ENCODE measurements at regions of chr19 and their contacts with region 1.

Region 1: DNA sequence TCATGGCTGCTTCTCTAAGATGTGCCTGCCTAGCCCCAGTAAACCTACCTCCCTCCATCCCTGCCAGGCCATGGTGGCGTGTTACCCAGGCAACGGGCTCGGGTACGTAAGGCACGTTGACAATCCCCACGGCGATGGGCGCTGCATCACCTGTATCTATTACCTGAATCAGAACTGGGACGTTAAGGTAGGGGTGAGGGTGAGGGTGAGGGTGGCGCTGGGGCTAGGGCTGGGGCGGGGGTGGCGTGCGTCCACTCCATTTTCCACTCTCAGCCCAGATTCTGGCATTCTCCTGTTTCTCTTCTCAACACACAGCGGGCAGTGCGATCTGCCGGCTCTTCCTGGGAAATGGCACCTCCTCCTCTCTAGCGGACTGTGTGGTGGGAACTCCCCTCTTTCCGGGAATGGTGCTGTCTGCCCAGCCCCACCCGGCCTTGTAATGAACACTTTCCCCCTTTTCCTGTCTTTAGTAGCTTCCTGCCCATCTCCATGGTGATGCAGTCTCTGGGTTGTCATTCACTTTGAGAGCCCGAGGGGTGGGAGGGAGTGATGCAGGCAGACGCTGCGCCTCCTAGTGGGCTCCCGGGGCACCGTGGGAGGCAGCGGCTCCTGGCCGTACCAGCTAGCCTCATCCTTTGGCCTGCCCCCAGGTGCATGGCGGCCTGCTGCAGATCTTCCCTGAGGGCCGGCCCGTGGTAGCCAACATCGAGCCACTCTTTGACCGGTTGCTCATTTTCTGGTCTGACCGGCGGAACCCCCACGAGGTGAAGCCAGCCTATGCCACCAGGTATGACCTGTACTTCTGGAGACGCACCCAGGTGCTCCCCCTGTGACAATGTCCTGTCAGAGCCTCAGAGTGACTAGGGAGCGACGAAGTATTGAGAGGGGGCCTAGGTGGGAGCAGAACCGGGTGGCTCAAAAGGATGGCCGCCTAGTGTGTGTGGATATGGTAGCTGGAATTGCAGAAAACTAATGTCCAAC is 7.8 kb downstream of the EGLN2 start:
- DNase-seq: peak; percentile 71 to 92 (median 80)
- ATAC-seq: peak; percentile 37 to 55
- H3K4me3 Mint-ChIP-seq: peak overlapping the region; percentile 79 to 98 (median 90)
- H3K27ac Mint-ChIP-seq: peak overlapping the region; percentile 98 to 100 (median 100)
- H3K4me1 Mint-ChIP-seq: peaks cover 55 to 91% (median 88%) of the 10 kb centered on the region in 4 donors
- H3K27me3 Mint-ChIP-seq: no peaks in the 10 kb centered on the region

Region 2: DNA sequence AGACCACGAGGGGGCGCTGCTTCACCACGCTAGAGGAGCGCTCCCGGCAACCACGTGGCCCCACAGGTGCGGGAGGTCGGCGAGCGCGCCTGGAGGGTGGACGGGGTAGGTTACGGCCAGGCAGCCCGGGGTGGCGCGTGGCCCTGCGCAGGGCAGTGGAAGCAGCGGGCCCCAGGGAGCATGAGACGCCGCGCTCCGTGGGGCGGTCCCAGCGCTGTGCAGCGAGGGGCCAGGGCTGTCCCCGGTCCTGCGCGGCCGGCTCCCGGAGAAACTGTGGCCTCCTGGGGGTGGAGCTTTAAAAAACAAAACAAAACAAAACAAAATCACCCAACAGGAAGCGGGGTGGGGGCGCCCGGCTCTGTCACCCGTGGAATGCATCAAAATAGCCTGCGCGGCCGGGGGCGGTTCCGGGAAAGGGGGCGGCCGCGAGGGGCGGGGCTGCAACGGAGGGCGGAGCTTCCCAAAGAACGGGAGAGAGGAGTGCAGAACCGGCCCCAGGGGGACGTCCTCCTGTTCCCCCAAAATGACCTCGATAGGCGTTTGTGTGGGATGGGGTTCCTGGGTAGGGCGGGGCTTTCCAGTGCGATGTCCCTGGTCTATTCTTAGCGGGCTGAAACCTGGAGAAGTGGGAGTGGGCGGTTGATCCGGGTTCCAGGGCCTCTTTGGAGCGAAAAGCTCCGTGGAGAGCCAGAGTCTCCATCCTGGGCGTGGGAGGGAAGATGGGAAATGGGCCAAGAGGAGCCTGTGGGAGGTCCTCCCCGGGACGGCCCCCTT is 143.7 kb before region 1 on chr19:
- POLR2A ChIA-PET with region 1: interaction called, 18 read pairs
- DNase-seq: peak; percentile 81 to 98 (median 92)
- ATAC-seq: peak; percentile 91 to 92
- H3K4me3 Mint-ChIP-seq: peak overlapping the region; percentile 76 to 91 (median 84)
- H3K27ac Mint-ChIP-seq: peak overlapping the region; percentile 63 to 93 (median 90)
- H3K4me1 Mint-ChIP-seq: peaks cover 6 to 15% (median 8%) of the 10 kb centered on the region in 4 donors
- H3K27me3 Mint-ChIP-seq: no peaks in the 10 kb centered on the region

Region 3: DNA sequence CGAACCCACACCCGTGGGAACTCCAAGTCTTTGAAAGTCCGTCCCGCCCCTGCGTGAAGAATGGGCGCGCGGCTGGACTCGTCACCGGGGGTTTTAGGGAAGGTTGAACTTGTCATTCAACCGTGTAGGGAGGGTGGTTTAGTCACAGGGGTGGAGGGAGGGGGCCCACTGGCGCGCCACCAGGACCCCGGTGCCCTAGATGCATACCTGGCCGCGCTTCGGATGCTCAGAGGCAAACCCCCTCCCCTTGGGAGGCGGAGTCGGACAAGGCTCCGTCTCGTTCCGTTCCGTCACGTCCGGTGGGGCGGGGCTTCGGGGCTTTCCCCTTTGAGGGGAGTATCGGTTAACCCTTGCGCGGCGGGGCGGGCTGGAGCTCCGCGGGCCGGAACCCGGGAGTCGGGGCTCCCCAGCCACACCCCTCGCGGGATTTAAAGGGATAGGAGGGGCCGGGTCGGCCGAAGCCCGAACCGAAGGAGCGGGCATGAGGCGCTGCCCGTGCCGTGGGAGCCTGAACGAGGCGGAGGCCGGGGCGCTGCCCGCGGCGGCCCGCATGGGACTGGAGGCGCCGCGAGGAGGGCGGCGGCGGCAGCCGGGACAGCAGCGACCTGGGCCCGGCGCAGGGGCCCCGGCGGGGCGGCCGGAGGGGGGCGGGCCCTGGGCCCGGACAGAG is 90.0 kb before region 1 on chr19 and contains the starts of genes COQ8B and ITPKC:
- POLR2A ChIA-PET with region 1: interaction called, 17 read pairs
- DNase-seq: peak; percentile 99 to 100 (median 99)
- ATAC-seq: peak; percentile 58 to 72
- H3K4me3 Mint-ChIP-seq: peak within 1 kb of the TSS; percentile 80 to 98 (median 92)
- H3K27ac Mint-ChIP-seq: peak within 1 kb of the TSS; percentile 90 to 100 (median 98)
- H3K4me1 Mint-ChIP-seq: peaks cover 32 to 74% (median 70%) of the 10 kb centered on the region in 4 donors
- H3K27me3 Mint-ChIP-seq: no peaks in the 10 kb centered on the region
- polyA plus RNA-seq, gene COQ8B: 9.8 to 14.8 (median 13.3) TPM
- polyA plus RNA-seq, gene ITPKC: 2.9 to 5.7 (median 4.0) TPM

Region 4: DNA sequence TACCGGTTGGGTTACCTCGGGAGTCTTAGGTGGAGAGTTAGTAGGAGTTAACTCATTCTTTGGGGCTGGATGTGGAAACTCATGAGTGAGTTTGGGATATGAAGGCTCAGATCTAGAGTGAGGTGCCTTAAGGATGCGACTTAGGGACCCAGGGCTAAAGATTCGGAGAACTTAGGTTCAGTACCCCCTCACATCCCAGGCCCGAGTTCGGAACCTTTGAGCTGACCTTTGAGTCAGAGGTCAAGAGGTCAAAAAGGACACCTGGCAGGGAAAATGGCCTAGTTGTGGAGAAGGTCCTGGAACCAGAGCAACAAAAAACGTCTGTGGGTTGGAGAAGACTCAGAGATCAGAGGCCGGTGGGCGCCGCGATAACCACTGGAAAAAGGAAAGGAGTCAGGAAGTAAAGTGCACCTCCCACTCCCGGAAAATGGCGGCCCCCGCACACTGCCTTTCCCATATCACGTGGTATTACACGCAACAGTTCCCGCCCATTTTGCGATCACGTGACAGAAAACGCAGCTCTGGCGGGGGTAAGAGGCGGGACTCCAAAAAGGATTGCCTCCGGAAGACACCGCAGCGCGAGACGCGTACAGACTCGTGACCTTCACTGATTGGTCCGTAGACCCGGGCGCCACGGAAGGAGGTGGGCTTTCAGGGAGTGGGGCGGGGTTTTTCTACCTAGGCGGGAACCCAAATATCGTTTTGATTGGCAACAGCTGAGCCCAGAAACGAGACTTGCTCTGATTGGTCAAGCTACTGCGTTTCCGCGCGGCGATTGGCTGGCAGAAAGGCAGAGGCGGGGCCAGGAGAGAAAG is 56.5 kb before region 1 on chr19 and contains the start of gene ACTMAP:
- POLR2A ChIA-PET with region 1: interaction called, 55 read pairs
- DNase-seq: peak in 9 of 10 donors; percentile 94 to 100 (median 100)
- ATAC-seq: peak; percentile 87 to 90
- H3K4me3 Mint-ChIP-seq: peak within 1 kb of the TSS; percentile 91 to 100 (median 99)
- H3K27ac Mint-ChIP-seq: peak within 1 kb of the TSS; percentile 88 to 99 (median 99)
- H3K4me1 Mint-ChIP-seq: peaks cover 28 to 52% (median 47%) of the 10 kb centered on the region in 4 donors
- H3K27me3 Mint-ChIP-seq: no peaks in the 10 kb centered on the region
- polyA plus RNA-seq, gene ACTMAP: 2.5 to 4.6 (median 3.4) TPM

Region 5: DNA sequence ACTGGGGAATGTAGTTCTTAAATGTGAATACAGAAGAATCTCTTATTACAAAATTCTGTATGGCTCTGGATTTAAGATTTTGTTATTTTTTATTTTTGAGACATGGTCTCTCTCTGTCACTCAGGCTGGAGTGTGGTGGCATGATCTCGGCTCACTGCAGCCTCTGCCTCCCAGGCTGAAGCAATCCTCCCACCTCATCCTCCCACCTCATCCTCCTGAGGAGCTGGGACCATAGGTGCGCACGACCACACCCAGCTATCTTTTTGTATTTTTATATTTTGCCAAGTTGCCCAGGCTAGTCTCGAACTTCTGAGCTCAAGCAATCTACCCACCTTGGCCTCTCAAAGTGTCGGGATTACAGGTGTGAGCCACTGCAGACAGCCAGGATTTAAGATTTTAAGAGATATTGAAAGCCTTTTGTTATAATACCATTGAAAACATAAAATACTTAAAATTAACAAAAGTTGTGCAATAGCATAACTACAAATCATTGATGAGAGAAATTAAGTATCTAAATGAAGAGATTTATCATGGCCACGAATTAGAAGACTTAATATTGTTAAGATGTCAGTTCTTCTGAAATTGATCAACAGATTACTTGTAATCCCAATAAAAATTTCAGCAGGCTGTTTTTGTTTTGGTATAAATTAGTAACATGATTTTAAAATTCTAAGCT is 30.1 kb after region 1 on chr19:
- POLR2A ChIA-PET with region 1: no interaction called
- DNase-seq: no peak
- ATAC-seq: no peak
- H3K4me3 Mint-ChIP-seq: no peak overlapping the region
- H3K27ac Mint-ChIP-seq: peak overlapping the region in 2 of 10 donors; percentile 39 to 52
- H3K4me1 Mint-ChIP-seq: peaks cover 2 to 14% (median 13%) of the 10 kb centered on the region in 4 donors
- H3K27me3 Mint-ChIP-seq: no peaks in the 10 kb centered on the region